Caco-2 (cell line): ENCODE measurements at regions of chr7 and their contacts with region 1.

Region 1: GRCh38 chr7:35985126-35985754 is 167.8 kb upstream of the EEPD1 start:
- DNase-seq: peak; percentile 74 to 80
- H3K4me3 ChIP-seq: no peak overlapping the region
- H3K4me3 Mint-ChIP-seq: no peak overlapping the region
- H3K27ac Mint-ChIP-seq: no peak overlapping the region
- H3K4me1 ChIP-seq: no peaks in the 10 kb centered on the region
- H3K4me1 Mint-ChIP-seq: no peaks in the 10 kb centered on the region
- H3K27me3 ChIP-seq: no peaks in the 10 kb centered on the region
- H3K27me3 Mint-ChIP-seq: no peaks in the 10 kb centered on the region
- CTCF ChIP-seq: peak; percentile 87 to 92

Region 2: DNA sequence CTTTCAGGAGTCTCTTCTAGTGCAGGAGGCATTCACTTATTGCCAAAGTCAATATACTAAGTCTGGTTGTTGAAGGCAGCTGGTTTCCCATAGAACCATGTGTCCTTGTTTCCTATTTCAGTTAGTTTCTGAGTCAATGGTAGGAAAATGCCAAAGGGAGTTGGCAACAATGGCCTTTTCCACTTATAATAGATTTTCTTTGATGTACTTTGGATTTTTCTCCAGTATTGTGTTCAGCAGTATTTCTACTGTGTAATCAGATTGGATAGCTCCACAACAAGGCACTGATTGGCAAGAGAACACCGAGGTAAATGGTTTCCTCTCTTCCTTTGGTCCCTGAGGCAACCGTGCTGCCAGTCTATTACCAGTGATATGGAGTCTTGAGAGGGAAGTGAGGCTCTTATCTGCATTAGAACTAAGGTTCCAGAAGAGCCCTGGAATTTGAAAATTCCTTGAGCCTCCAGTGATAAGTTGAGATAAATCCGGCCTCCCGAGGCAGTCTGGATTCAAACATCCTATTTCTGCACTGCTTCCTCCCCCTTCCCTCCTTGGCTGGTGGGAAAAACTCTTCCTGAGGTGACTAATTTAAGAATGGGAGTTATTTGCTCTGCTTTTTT is 192.3 kb before region 1 on chr7:
- CTCF ChIA-PET with region 1: no interaction called
- POLR2A ChIA-PET with region 1: no interaction called
- intact Hi-C with region 1: no loop called
- DNase-seq: no peak
- H3K4me3 ChIP-seq: no peak overlapping the region
- H3K4me3 Mint-ChIP-seq: no peak overlapping the region
- H3K27ac Mint-ChIP-seq: no peak overlapping the region
- H3K4me1 ChIP-seq: peaks cover 13% of the 10 kb centered on the region
- H3K4me1 Mint-ChIP-seq: peaks cover 7% of the 10 kb centered on the region
- H3K27me3 ChIP-seq: no peaks in the 10 kb centered on the region
- H3K27me3 Mint-ChIP-seq: no peaks in the 10 kb centered on the region
- CTCF ChIP-seq: no peak

Region 3: DNA sequence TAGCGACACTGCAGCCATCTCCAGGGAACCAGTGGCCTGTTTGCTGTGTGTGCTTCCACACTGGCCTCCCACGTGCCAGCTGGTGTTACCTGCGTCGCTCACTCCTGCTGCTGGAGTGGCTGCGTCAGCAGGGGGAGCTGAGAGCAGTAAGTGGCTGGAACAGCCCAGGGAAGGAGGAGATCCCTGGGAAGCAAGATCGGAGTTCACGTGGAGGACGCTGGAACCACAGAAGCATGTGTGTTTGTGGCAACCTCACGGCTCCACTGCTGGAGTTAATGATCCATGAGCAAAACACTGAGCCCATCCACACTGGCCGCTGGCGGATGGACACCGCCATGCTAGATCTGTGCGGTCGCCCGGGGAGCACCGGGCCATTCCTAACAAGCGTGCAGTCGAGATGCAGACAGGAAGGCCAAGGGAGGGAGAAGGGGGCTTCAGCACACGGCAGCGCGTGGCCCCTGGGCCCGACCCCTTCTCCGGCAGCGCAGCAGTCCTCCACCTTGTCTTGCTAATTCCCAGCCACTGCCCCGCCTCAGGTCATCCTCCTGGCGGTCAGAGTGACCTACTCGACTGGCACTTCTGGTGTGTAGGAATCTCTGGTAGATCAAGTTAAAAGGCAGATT is 99.3 kb after region 1 on chr7:
- CTCF ChIA-PET with region 1: no interaction called
- POLR2A ChIA-PET with region 1: no interaction called
- intact Hi-C with region 1: loop called (anchors 1 kb)
- DNase-seq: peak; percentile 69 to 74
- H3K4me3 ChIP-seq: no peak overlapping the region
- H3K4me3 Mint-ChIP-seq: no peak overlapping the region
- H3K27ac Mint-ChIP-seq: no peak overlapping the region
- H3K4me1 ChIP-seq: peaks cover 16% of the 10 kb centered on the region; the same call in 1 of the 2 replicates
- H3K4me1 Mint-ChIP-seq: peaks cover 8% of the 10 kb centered on the region
- H3K27me3 ChIP-seq: no peaks in the 10 kb centered on the region
- H3K27me3 Mint-ChIP-seq: no peaks in the 10 kb centered on the region
- CTCF ChIP-seq: peak; percentile 50 to 71

Region 4: DNA sequence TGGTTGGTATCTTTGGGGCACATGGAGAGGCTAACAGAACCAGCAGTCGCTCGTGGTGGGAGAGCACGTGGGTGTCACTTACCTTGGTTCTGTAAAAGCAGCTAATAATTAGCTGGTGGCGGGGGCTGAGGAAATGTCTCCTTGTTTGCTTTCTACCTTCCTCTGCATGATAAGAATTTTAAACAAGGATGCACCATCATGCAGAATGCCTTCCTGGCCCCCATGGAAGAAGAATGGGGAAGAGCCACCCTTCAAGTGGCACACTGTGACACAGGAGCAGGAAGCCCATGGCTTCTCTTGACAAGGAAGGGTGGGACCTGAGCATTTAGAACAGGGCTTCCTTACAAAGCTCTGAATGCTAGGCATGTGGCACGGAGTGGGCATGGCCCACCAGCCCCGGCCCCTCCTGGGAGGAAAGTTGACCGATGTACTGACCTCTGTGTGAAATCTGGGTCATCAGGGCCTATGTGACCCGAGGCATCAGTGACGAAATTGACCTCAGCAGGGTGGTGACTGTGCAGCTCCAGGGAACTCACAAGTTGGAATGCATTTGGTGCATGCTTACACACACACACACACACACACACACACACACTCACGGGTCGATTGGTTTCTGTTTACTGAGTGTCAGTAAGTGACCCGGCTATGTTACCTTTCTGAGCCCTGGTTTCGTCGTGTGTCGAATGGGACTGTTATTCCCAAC is 287.5 kb after region 1 on chr7:
- CTCF ChIA-PET with region 1: no interaction called
- POLR2A ChIA-PET with region 1: no interaction called
- intact Hi-C with region 1: no loop called
- DNase-seq: peak; percentile 21 to 53
- H3K4me3 ChIP-seq: no peak overlapping the region
- H3K4me3 Mint-ChIP-seq: no peak overlapping the region
- H3K27ac Mint-ChIP-seq: peak overlapping the region; percentile 21
- H3K4me1 ChIP-seq: peaks cover 5% of the 10 kb centered on the region; the same call in 1 of the 2 replicates
- H3K4me1 Mint-ChIP-seq: peaks cover 5% of the 10 kb centered on the region
- H3K27me3 ChIP-seq: no peaks in the 10 kb centered on the region
- H3K27me3 Mint-ChIP-seq: no peaks in the 10 kb centered on the region
- CTCF ChIP-seq: no peak

Region 5: GRCh38 chr7:36315309-36316133 is 330.3 kb after region 1 on chr7:
- CTCF ChIA-PET with region 1: interaction called, 16 read pairs
- POLR2A ChIA-PET with region 1: no interaction called
- intact Hi-C with region 1: loop called (anchors 1 kb)
- DNase-seq: no peak
- H3K4me3 ChIP-seq: no peak overlapping the region
- H3K4me3 Mint-ChIP-seq: no peak overlapping the region
- H3K27ac Mint-ChIP-seq: no peak overlapping the region
- H3K4me1 ChIP-seq: no peaks in the 10 kb centered on the region
- H3K4me1 Mint-ChIP-seq: no peaks in the 10 kb centered on the region
- H3K27me3 ChIP-seq: no peaks in the 10 kb centered on the region; the same call in 1 of the 2 replicates
- H3K27me3 Mint-ChIP-seq: no peaks in the 10 kb centered on the region
- CTCF ChIP-seq: no peak